HCT116 (cell line): ENCODE measurements at regions of chr13 and their contacts with region 1.

Region 1: DNA sequence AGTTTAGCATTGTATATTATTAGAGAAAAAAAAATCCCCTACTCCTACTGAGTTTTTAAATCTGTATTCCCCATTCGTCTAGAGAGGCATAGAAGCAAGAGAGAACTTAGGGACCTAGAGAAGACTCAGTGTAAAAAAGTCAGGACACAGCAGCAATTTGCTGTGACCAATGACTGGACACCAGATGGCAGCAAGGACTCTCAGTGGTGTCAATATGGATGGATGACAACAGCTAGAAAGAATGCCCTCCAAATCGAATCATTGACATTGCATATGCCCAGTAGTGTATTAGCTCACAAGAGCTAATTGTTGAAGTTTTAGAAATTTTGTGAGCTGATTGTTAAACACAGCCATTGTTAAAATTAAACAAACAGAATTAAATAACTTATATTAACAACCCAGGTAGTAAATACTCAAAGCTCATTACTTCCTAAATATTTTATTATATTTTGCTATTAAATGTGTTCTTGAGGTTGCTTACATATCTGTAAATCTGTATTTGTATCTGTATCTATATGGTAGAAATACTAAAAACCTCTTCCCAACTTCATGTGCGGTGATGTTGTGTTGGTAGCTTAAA is 43.9 kb downstream of the SIAH3 start:
- DNase-seq: peak; percentile 62
- ATAC-seq: peak; percentile 99
- H3K4me3 ChIP-seq: no peak overlapping the region
- H3K27ac ChIP-seq: no peak overlapping the region
- H3K4me1 ChIP-seq: no peaks in the 10 kb centered on the region
- H3K27me3 ChIP-seq: no peaks in the 10 kb centered on the region
- CTCF ChIP-seq: peak; percentile 66 to 77 (median 70)
- POLR2A ChIP-seq: no peak
- RAD21 ChIP-seq: peak; percentile 85

Region 2: GRCh38 chr13:45257638-45258338 is 549.8 kb before region 1 on chr13:
- CTCF ChIA-PET with region 1: no interaction called
- POLR2A ChIA-PET with region 1: no interaction called
- RAD21 ChIA-PET with region 1: no interaction called
- intact Hi-C with region 1: no loop called
- DNase-seq: no peak
- ATAC-seq: peak; percentile 34
- H3K4me3 ChIP-seq: no peak overlapping the region
- H3K27ac ChIP-seq: peak overlapping the region; percentile 5; the same call in 1 of the 2 replicates
- H3K4me1 ChIP-seq: peaks cover 27 to 30% of the 10 kb centered on the region in 2 experiments; a peak in 3 of 4 replicates
- H3K27me3 ChIP-seq: no peaks in the 10 kb centered on the region
- CTCF ChIP-seq: no peak
- POLR2A ChIP-seq: no peak
- RAD21 ChIP-seq: no peak

Region 3: GRCh38 chr13:45879670-45880069 is 72.1 kb after region 1 on chr13:
- CTCF ChIA-PET with region 1: interaction called, 22 read pairs
- POLR2A ChIA-PET with region 1: no interaction called
- RAD21 ChIA-PET with region 1: interaction called in 1 of 2 experiments, 9 read pairs
- intact Hi-C with region 1: loop called (anchors 2 kb)
- DNase-seq: peak; percentile 56
- ATAC-seq: peak; percentile 89
- H3K4me3 ChIP-seq: no peak overlapping the region
- H3K27ac ChIP-seq: no peak overlapping the region
- H3K4me1 ChIP-seq: peaks cover 4 to 27% of the 10 kb centered on the region in 2 experiments; a peak in 3 of 4 replicates
- H3K27me3 ChIP-seq: no peaks in the 10 kb centered on the region
- CTCF ChIP-seq: peak; percentile 40 to 77 (median 71); a peak in 5 of 6 replicates
- POLR2A ChIP-seq: no peak
- RAD21 ChIP-seq: peak; percentile 44

Region 4: DNA sequence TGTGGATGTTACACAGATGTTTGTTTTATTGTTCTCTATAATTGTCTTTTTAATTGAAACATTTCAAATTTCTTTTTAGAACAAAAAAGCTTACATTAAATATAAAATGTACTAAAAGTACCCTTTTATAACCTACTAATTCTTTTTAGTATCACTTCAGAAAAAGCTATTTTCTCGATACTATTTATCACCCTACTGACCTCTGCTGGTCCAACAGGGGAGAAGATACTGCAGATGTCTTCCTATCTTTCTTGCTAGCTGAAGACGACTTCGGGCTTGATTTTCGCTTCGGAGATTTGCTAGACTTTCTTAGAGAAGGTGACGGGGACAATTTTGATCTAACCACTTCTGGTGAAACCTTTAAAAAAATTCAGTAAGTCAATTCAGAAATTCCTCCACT is 202.5 kb after region 1 on chr13:
- CTCF ChIA-PET with region 1: interaction called, 21 read pairs
- POLR2A ChIA-PET with region 1: no interaction called
- RAD21 ChIA-PET with region 1: interaction called in 1 of 2 experiments, 3 read pairs
- intact Hi-C with region 1: loop called (anchors 2 kb)
- DNase-seq: no peak
- ATAC-seq: no peak
- H3K4me3 ChIP-seq: no peak overlapping the region
- H3K27ac ChIP-seq: no peak overlapping the region
- H3K4me1 ChIP-seq: no peaks in the 10 kb centered on the region
- H3K27me3 ChIP-seq: no peaks in the 10 kb centered on the region
- CTCF ChIP-seq: peak in 2 of 3 experiments; percentile 33 to 35; a peak in 4 of 6 replicates
- POLR2A ChIP-seq: no peak
- RAD21 ChIP-seq: no peak

Region 5: GRCh38 chr13:46126552-46127357 is 319.1 kb after region 1 on chr13:
- CTCF ChIA-PET with region 1: interaction called, 38 read pairs
- POLR2A ChIA-PET with region 1: no interaction called
- RAD21 ChIA-PET with region 1: interaction called, 5 read pairs
- intact Hi-C with region 1: loop called (anchors 1 kb)
- DNase-seq: peak; percentile 57
- ATAC-seq: peak; percentile 100
- H3K4me3 ChIP-seq: no peak overlapping the region
- H3K27ac ChIP-seq: no peak overlapping the region
- H3K4me1 ChIP-seq: no peaks in the 10 kb centered on the region
- H3K27me3 ChIP-seq: peaks cover 30% of the 10 kb centered on the region
- CTCF ChIP-seq: peak; percentile 86 to 97 (median 93)
- POLR2A ChIP-seq: no peak
- RAD21 ChIP-seq: peak; percentile 89

Region 6: GRCh38 chr13:46321494-46322225 is 514.0 kb after region 1 on chr13:
- CTCF ChIA-PET with region 1: interaction called, 8 read pairs
- POLR2A ChIA-PET with region 1: no interaction called
- RAD21 ChIA-PET with region 1: no interaction called
- intact Hi-C with region 1: loop called (anchors 1 kb)
- DNase-seq: peak; percentile 39
- ATAC-seq: peak; percentile 85
- H3K4me3 ChIP-seq: no peak overlapping the region
- H3K27ac ChIP-seq: no peak overlapping the region
- H3K4me1 ChIP-seq: no peaks in the 10 kb centered on the region
- H3K27me3 ChIP-seq: no peaks in the 10 kb centered on the region
- CTCF ChIP-seq: peak; percentile 68 to 85 (median 81); a peak in 5 of 6 replicates
- POLR2A ChIP-seq: no peak
- RAD21 ChIP-seq: peak; percentile 79